ENCODE measurements at regions of chr1 and their contacts with region 1.

Region 1: GRCh38 chr1:62082456-62083363 is 111.9 kb upstream of the L1TD1 start:
- DNase-seq: no peak
- H3K4me3 ChIP-seq: no peak overlapping the region
- H3K27ac ChIP-seq: no peak overlapping the region
- H3K27me3 ChIP-seq: peaks cover 3% of the 10 kb centered on the region
- CTCF ChIP-seq: peak; percentile 96

Region 2: GRCh38 chr1:61887076-61887867 is 195.4 kb before region 1 on chr1:
- CTCF ChIA-PET with region 1: no interaction called
- POLR2A ChIA-PET with region 1: no interaction called
- DNase-seq: no peak
- H3K4me3 ChIP-seq: no peak overlapping the region
- H3K27ac ChIP-seq: no peak overlapping the region
- H3K27me3 ChIP-seq: no peaks in the 10 kb centered on the region
- CTCF ChIP-seq: no peak

Region 3: DNA sequence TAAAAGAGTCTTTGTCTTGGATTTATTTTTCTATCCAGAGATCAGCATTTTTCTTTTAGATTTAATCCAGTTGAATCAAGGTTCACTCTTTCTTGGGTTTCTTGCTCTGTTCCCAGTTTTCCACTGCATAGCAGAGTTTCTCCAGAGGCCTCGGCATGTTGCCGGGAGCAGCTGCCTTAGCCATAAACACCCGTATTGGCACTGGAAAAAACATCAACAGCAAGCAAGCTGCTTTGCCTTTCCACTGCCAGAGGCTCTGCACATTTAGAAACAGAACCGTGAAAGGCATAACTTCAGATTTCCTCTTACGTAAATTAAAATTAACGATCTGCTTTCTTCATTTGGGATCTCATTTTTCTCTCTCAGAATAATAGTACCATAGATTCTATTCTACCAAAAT is 69.9 kb before region 1 on chr1:
- CTCF ChIA-PET with region 1: no interaction called
- POLR2A ChIA-PET with region 1: no interaction called
- DNase-seq: no peak
- H3K4me3 ChIP-seq: no peak overlapping the region
- H3K27ac ChIP-seq: no peak overlapping the region
- H3K27me3 ChIP-seq: no peaks in the 10 kb centered on the region
- CTCF ChIP-seq: no peak

Region 4: GRCh38 chr1:62064829-62065407 is 17.8 kb before region 1 on chr1:
- CTCF ChIA-PET with region 1: interaction called, 18 read pairs
- POLR2A ChIA-PET with region 1: no interaction called
- DNase-seq: no peak
- H3K4me3 ChIP-seq: no peak overlapping the region
- H3K27ac ChIP-seq: no peak overlapping the region
- H3K27me3 ChIP-seq: no peaks in the 10 kb centered on the region
- CTCF ChIP-seq: no peak

Region 5: DNA sequence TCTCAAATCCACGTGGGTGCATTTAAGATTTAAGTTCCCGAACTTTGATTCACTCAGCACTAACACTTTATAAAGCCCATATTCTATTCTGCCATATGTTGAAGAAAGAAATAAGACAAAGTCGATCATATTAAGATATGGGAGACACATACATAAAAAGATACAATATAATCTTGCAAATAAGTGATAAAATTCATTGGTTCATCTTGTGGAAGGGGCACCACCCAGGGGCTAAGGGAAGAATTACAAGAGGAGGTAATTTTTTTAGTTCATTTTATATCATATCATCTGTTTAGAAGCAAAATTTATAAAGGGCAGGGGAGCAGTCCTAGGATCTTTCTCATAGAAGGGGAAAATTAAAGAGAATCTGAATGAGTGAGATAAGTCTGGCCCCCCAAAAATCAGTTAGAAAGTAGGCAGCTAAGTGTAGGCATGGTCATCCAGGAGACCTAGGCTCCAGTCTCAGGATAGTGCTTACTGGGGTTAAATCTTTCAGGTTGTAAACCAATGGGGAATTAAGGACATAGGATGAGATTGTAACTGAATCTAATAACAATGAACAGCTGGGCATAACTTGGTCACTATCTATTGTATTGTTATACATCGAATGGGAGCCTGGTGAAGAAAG is 12.2 kb before region 1 on chr1:
- CTCF ChIA-PET with region 1: interaction called, 22 read pairs
- POLR2A ChIA-PET with region 1: no interaction called
- DNase-seq: no peak
- H3K4me3 ChIP-seq: no peak overlapping the region
- H3K27ac ChIP-seq: no peak overlapping the region
- H3K27me3 ChIP-seq: peaks cover 4% of the 10 kb centered on the region
- CTCF ChIP-seq: peak; percentile 55

Region 6: GRCh38 chr1:62093261-62093660 is 10.6 kb after region 1 on chr1:
- CTCF ChIA-PET with region 1: interaction called, 72 read pairs
- POLR2A ChIA-PET with region 1: interaction called, 4 read pairs
- DNase-seq: no peak
- H3K4me3 ChIP-seq: no peak overlapping the region
- H3K27ac ChIP-seq: no peak overlapping the region
- H3K27me3 ChIP-seq: no peaks in the 10 kb centered on the region
- CTCF ChIP-seq: no peak

Region 7: DNA sequence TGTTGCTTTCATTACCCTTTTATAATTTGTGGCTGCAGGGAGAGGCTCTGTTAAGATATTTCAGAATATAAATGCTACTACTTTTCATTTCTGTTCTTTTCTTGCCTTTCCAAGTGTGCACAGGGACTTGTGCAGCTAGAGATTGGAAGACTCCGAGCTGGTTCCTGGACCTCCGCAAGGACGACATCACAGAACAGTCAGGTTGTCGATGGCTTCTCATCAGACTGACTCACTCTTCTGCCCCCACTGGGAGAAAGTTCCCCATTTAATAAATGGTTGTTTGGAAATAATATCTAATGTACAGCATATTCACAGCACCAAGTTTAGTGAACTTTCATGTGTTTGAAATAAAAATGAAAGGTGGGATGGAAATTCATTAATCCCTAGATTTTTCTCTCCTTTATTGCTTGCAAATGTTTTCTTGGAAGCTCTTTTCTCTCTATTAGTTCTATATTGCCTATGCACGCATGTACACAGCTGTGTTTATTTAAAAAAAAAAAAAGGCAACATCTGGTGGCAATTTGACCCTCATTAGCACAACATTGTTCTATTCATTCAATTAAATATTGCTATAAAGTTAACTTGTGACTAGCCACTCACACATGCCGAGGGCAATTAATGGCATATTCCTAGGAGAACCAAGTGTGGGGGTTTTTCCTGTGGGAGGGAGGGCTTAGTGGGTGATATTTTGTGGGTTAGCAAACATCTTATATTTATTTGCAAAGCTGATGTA is 34.5 kb after region 1 on chr1:
- CTCF ChIA-PET with region 1: interaction called, 13 read pairs
- POLR2A ChIA-PET with region 1: no interaction called
- DNase-seq: no peak
- H3K4me3 ChIP-seq: no peak overlapping the region
- H3K27ac ChIP-seq: no peak overlapping the region
- H3K27me3 ChIP-seq: no peaks in the 10 kb centered on the region
- CTCF ChIP-seq: no peak

Region 8: DNA sequence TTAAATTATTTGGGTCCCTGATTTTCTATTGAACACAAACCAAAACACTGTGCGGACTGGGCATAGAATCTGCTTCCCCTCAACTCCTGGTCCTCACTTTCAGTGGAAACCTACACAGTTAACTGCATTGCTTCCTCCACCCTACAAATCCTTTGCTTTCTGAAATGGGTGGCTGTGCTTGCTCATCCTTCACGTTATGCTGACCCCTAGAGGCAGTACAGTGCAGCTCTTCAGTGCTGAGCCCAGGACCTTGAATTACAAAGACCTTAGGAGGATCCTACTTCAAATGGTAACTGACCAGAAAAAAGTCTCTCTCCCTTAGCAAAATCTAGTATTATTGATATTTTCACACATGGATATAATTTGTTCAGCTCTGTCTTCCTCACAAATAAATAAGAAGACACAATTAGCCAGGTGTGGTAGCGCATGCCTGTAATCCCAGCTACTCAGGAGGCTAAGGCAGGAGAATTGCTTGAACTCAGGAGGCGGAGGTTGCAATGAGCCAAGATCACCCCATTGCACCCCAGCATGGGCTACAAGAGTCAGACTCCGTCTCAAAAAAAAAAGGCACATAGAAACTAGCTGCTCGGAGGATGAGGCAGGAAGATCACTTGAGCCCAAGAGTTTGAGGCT is 48.5 kb after region 1 on chr1:
- CTCF ChIA-PET with region 1: interaction called, 109 read pairs
- POLR2A ChIA-PET with region 1: no interaction called
- DNase-seq: peak; percentile 46
- H3K4me3 ChIP-seq: no peak overlapping the region
- H3K27ac ChIP-seq: no peak overlapping the region
- H3K27me3 ChIP-seq: no peaks in the 10 kb centered on the region
- CTCF ChIP-seq: peak; percentile 99

Region 9: GRCh38 chr1:62144238-62144831 is 61.6 kb after region 1 on chr1:
- CTCF ChIA-PET with region 1: interaction called, 84 read pairs
- POLR2A ChIA-PET with region 1: no interaction called
- DNase-seq: peak; percentile 11
- H3K4me3 ChIP-seq: no peak overlapping the region
- H3K27ac ChIP-seq: no peak overlapping the region
- H3K27me3 ChIP-seq: no peaks in the 10 kb centered on the region
- CTCF ChIP-seq: peak; percentile 75

Region 10: GRCh38 chr1:62194651-62195544 is 112.2 kb after region 1 on chr1 and contains the start of gene L1TD1:
- CTCF ChIA-PET with region 1: no interaction called
- POLR2A ChIA-PET with region 1: no interaction called
- DNase-seq: no peak
- H3K4me3 ChIP-seq: no peak within 1 kb of the TSS
- H3K27ac ChIP-seq: no peak within 1 kb of the TSS
- H3K27me3 ChIP-seq: peaks cover 3% of the 10 kb centered on the region
- CTCF ChIP-seq: no peak
- polyA plus RNA-seq, gene L1TD1: not detected in 2 replicates

Region 11: DNA sequence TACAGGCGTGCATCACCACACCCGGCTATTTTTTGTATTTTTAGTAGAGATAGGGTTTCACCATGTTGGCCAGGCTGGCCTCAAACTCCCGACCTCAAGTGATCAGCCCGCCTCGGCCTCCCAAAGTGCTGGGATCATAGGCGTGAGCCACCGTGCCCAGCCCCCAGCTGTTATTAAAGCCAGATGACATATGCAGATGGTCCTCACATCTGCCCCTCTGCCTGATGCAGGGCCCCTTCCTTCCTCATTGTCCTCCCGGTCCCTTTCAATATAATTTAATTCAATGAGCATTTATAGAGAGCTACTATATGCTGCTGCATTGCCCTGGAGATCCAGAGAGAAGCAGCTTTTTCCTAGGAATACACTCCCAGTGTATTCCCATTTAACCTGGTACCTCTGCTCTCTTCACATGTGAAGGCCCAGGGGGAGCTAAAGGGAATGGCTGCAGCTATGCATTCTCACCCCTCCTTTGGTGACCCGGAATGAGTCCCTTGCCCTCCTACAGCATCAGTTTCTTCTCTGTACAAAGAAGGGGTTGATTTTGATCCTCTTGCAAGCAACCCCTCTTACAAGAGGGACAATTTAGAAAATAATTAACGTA is 167.5 kb after region 1 on chr1:
- CTCF ChIA-PET with region 1: no interaction called
- POLR2A ChIA-PET with region 1: no interaction called
- DNase-seq: no peak
- H3K4me3 ChIP-seq: no peak overlapping the region
- H3K27ac ChIP-seq: no peak overlapping the region
- H3K27me3 ChIP-seq: no peaks in the 10 kb centered on the region
- CTCF ChIP-seq: no peak

Measured in AG04450 (cell line).